ENCODE measurements at regions of chr1 and their contacts with region 1.

Region 1: GRCh38 chr1:110106013-110106941 is 6.0 kb upstream of the UBL4B start:
- DNase-seq: peak in 33 of 35 experiments; percentile 18 to 73 (median 41)
- ATAC-seq: peak; percentile 77 to 85 (median 82)
- H3K4me3 ChIP-seq: no peak overlapping the region
- H3K4me3 Mint-ChIP-seq: no peak overlapping the region
- H3K27ac ChIP-seq: no peak overlapping the region
- H3K27ac Mint-ChIP-seq: no peak overlapping the region
- H3K4me1 ChIP-seq: peaks cover 0 to 3% of the 10 kb centered on the region in 2 experiments
- H3K4me1 Mint-ChIP-seq: peaks cover 0 to 6% (median 0%) of the 10 kb centered on the region in 3 donors
- H3K27me3 ChIP-seq: peaks cover 0 to 37% of the 10 kb centered on the region in 2 experiments
- H3K27me3 Mint-ChIP-seq: peaks cover 5 to 16% of the 10 kb centered on the region in 2 donors

Region 2: DNA sequence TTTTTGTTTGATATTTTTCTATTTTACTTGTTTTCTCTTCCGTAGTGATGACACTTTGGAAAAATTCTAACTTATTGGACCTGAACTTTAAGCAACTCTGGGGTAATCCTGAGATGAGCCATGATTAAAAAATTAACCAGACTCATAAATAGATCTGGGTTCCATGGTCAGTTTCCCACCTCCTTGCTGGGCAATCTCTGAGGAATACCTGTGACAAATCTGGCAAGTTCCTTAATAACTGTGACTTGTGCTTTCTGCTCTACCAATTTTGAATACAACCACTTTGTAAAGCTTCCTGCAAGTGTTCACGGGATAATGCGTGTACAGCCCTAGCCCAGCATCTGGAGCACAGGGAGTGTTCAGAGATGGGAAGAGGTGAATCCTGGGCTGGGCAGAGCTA is 1318.0 kb after region 1 on chr1:
- CTCF ChIA-PET with region 1: interaction called in 1 of 2 experiments, 10 read pairs
- POLR2A ChIA-PET with region 1: no interaction called
- DNase-seq: no peak
- ATAC-seq: no peak
- H3K4me3 ChIP-seq: no peak overlapping the region
- H3K4me3 Mint-ChIP-seq: no peak overlapping the region
- H3K27ac ChIP-seq: no peak overlapping the region
- H3K27ac Mint-ChIP-seq: no peak overlapping the region
- H3K4me1 ChIP-seq: no peaks in the 10 kb centered on the region
- H3K4me1 Mint-ChIP-seq: peaks cover 3 to 8% (median 4%) of the 10 kb centered on the region in 3 donors
- H3K27me3 ChIP-seq: peaks cover 0 to 4% of the 10 kb centered on the region in 2 experiments
- H3K27me3 Mint-ChIP-seq: no peaks in the 10 kb centered on the region